Activated naive CD4-positive, alpha-beta T cell treated with anti-CD3 and anti-CD28 coated beads for 36 hours (primary cell): ENCODE measurements at regions of chr4 and their contacts with region 1.

Region 1: GRCh38 chr4:14178421-14178820 is 550.9 kb upstream of the BOD1L1 start:
- DNase-seq: peak; percentile 7
- H3K4me3 Mint-ChIP-seq: no peak overlapping the region
- H3K27ac Mint-ChIP-seq: peak overlapping the region; percentile 75
- H3K4me1 Mint-ChIP-seq: peaks cover 20% of the 10 kb centered on the region
- H3K27me3 Mint-ChIP-seq: no peaks in the 10 kb centered on the region

Region 2: DNA sequence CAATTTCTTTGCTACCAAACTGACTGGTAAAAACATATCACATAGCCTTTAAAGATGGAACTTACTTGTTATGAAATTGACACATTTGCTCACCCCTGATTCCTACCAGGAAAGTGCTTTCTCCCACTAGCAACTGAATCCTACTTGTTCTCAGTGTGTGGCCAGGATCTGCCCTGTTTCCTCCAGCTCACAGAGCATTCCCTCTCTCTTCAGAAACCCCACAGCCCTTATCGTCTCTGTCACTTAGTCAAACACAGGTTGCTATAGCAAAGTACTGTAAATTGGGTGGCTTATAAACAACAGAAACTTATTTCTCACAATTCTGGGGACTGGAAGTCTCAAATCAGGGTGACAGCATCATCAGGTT is 285.7 kb before region 1 on chr4:
- CTCF ChIA-PET with region 1: no interaction called
- intact Hi-C with region 1: loop called (anchors 5 kb)
- DNase-seq: no peak
- H3K4me3 Mint-ChIP-seq: no peak overlapping the region
- H3K27ac Mint-ChIP-seq: peak overlapping the region; percentile 55
- H3K4me1 Mint-ChIP-seq: peaks cover 17% of the 10 kb centered on the region
- H3K27me3 Mint-ChIP-seq: peaks cover 17% of the 10 kb centered on the region